ENCODE measurements at regions of chr1 and their contacts with region 1.

Region 1: DNA sequence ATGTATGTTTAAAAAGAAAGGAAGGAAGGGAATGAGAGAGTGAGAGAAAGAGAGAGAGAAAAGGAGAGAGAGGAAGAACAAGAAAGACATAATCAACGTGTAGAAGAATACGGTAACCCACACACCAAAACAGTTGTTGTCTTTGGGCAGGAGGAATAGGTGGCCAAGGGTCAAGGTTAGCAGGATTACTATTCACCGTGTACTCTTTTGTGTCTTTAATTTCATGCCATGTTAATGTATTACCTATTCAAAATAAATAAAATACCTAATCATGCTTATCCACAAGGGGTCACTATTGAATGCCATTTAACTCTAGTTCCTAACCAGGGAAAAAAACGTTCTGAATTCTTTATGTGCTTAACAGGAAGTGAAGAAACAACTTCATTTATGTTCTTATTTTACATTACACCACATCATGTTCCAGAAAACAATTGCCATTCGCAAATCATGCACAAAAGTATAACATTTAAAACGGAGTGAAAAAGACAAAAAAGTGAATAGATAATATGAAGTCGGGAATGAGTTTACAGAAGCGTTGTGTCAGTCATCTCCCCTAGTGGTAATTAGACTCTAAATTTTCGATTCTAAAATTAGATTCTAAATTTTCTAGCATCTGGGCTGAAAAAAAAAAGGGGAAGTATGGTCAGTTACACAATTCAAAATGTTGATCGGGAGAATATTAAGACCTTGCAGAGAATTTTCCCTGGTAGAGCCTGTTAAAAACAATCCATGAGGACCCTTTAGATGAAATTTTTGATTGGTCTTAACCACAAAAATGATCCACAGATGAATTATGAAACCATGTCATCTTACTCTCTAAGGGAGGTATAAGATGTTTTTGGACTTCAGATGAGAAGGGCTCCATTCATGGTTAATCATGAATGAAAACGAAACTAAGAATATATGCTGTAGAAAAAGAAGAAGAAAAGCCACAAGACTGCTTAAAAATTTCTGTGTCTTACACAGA is 700 bp upstream of the KMO start:
- DNase-seq: no peak
- ATAC-seq: peak; percentile 83
- H3K4me3 Mint-ChIP-seq: peak overlapping the region; percentile 77
- H3K27ac Mint-ChIP-seq: peak overlapping the region; percentile 95
- H3K4me1 Mint-ChIP-seq: peaks cover 19% of the 10 kb centered on the region
- H3K27me3 Mint-ChIP-seq: peaks cover 4% of the 10 kb centered on the region
- CTCF ChIP-seq: peak; percentile 79

Region 2: GRCh38 chr1:241519308-241520079 is 12.0 kb before region 1 on chr1 and contains the start of gene FH:
- CTCF ChIA-PET with region 1: interaction called, 10 read pairs
- POLR2A ChIA-PET with region 1: no interaction called
- intact Hi-C with region 1: no loop called
- DNase-seq: peak; percentile 97
- ATAC-seq: peak; percentile 98
- H3K4me3 Mint-ChIP-seq: peak within 1 kb of the TSS; percentile 93
- H3K27ac Mint-ChIP-seq: peak within 1 kb of the TSS; percentile 90
- H3K4me1 Mint-ChIP-seq: peaks cover 21% of the 10 kb centered on the region
- H3K27me3 Mint-ChIP-seq: peaks cover 17% of the 10 kb centered on the region
- CTCF ChIP-seq: no peak
- total RNA-seq, gene FH: 95.2 to 95.6 TPM

Region 3: GRCh38 chr1:241560849-241561187 is 29.3 kb after region 1 on chr1:
- CTCF ChIA-PET with region 1: no interaction called
- POLR2A ChIA-PET with region 1: no interaction called
- intact Hi-C with region 1: no loop called
- DNase-seq: no peak
- ATAC-seq: no peak
- H3K4me3 Mint-ChIP-seq: no peak overlapping the region
- H3K27ac Mint-ChIP-seq: no peak overlapping the region
- H3K4me1 Mint-ChIP-seq: no peaks in the 10 kb centered on the region
- H3K27me3 Mint-ChIP-seq: no peaks in the 10 kb centered on the region
- CTCF ChIP-seq: no peak

Region 4: DNA sequence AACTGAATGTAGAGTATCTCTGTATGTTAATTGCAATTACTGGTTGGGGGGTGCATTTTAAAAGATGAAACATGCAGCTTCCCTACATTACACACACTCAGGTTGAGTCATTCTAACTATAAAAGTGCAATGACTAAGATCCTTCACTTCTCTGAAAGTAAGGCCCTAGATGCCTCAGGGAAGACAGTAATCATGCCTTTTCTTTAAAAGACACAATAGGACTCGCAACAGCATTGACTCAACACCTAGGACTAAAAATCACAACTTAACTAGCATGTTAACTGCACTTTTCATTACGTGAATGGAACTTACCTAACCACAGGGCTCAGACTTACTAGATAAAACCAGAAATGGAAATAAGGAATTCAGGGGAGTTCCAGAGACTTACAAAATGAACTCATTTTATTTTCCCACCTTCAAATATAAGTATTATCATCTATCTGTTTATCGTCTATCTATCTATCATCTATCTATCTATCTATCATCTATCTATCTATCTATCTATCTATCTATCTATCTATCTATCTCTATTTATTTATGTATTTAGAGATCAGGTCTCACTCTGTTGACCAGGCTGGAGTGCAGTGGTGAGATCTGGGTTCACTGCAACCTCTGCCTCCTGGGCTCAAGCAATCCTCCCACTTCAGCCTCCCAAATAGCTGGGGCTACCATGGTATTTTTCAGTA is 60.9 kb after region 1 on chr1:
- CTCF ChIA-PET with region 1: no interaction called
- POLR2A ChIA-PET with region 1: interaction called, 3 read pairs
- intact Hi-C with region 1: loop called (anchors 5 kb)
- DNase-seq: no peak
- ATAC-seq: peak; percentile 96
- H3K4me3 Mint-ChIP-seq: no peak overlapping the region
- H3K27ac Mint-ChIP-seq: peak overlapping the region; percentile 63
- H3K4me1 Mint-ChIP-seq: peaks cover 18% of the 10 kb centered on the region
- H3K27me3 Mint-ChIP-seq: no peaks in the 10 kb centered on the region
- CTCF ChIP-seq: no peak

Region 5: GRCh38 chr1:241627453-241628259 is 96.2 kb after region 1 on chr1:
- CTCF ChIA-PET with region 1: interaction called, 5 read pairs
- POLR2A ChIA-PET with region 1: no interaction called
- intact Hi-C with region 1: loop called (anchors 2 kb)
- DNase-seq: peak; percentile 59
- ATAC-seq: peak; percentile 91
- H3K4me3 Mint-ChIP-seq: peak overlapping the region; percentile 53
- H3K27ac Mint-ChIP-seq: peak overlapping the region; percentile 85
- H3K4me1 Mint-ChIP-seq: peaks cover 31% of the 10 kb centered on the region
- H3K27me3 Mint-ChIP-seq: no peaks in the 10 kb centered on the region
- CTCF ChIP-seq: peak; percentile 73

Region 6: DNA sequence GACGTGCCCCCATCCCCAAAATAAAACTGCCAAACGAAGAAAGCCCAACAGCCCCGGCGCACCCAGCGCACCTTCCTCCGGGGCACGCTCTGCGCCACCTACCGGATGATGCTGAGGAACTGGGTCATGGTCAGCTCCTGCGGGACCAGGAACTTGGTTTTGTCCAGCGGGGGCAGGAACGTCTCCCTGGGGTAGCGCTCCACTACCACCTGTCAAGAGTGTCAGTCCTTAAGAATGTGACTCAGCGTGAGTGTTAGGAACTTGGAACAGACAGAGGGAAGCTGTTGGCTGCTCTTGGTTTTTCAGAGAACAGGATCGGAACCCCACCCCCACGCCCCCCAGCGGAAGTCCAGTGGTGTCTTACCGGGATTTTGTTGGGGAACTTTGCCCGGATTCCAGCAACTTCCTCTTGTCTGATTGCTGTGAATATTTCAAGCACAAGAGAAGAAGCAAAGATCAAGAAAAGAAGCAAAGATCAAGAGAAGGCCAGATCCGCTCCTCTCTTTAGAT is 467.0 kb after region 1 on chr1:
- CTCF ChIA-PET with region 1: interaction called, 3 read pairs
- POLR2A ChIA-PET with region 1: no interaction called
- intact Hi-C with region 1: loop called (anchors 10 kb)
- DNase-seq: peak; percentile 63
- ATAC-seq: peak; percentile 74
- H3K4me3 Mint-ChIP-seq: peak overlapping the region; percentile 24
- H3K27ac Mint-ChIP-seq: no peak overlapping the region
- H3K4me1 Mint-ChIP-seq: peaks cover 4% of the 10 kb centered on the region
- H3K27me3 Mint-ChIP-seq: peaks cover 5% of the 10 kb centered on the region
- CTCF ChIP-seq: peak; percentile 80